ENCODE measurements at regions of chr16 and their contacts with region 1.

Region 1: GRCh38 chr16:79997257-79997656 is 396.7 kb upstream of the MAF start:
- DNase-seq: no peak
- H3K4me3 ChIP-seq: no peak overlapping the region
- H3K27me3 ChIP-seq: no peaks in the 10 kb centered on the region
- CTCF ChIP-seq: peak; percentile 62

Region 2: GRCh38 chr16:80125677-80126076 is 128.4 kb after region 1 on chr16:
- CTCF ChIA-PET with region 1: no interaction called
- POLR2A ChIA-PET with region 1: no interaction called
- DNase-seq: no peak
- H3K4me3 ChIP-seq: no peak overlapping the region
- H3K27me3 ChIP-seq: peaks cover 1% of the 10 kb centered on the region; the same call in 1 of the 2 replicates
- CTCF ChIP-seq: no peak

Region 3: DNA sequence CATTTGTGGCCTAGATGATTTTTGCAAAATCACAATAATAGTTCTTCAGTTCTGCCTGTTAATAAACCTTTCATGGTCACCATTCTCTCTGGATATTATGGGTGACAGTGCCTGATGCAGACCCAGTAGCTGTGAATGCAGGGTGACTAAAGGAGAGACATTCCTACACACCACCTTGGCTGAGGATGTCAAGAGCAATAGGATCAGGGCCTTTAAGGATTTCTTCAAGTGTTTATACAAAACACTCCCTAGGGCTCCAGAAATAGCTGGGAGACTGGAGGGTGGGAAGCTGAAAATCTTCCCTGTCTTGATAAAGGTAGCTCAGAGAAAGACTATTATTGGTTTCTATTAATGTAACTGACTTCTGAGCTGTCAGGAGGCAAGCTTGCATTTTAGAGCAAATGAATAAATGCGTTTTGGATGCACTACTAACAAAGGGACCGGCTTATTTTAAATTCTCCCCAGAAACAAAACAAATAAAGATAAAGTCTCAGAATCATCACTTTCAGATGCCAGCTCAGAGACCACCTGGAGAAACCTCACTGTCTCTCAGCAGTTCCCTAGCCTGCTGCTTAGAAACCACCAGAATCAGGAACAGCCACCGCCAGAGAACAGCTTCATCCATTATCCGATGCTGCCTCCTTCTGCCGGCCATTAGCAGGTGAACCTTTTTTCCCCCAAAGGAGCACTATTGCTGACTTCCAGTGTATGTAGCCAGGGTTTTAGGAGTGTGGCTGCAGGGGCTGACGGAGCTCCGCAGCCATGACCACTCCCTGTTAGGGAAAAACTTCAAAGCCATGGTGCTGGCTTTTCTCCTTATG is 372.1 kb after region 1 on chr16:
- CTCF ChIA-PET with region 1: interaction called, 18 read pairs
- POLR2A ChIA-PET with region 1: no interaction called
- DNase-seq: no peak
- H3K4me3 ChIP-seq: no peak overlapping the region
- H3K27me3 ChIP-seq: no peaks in the 10 kb centered on the region
- CTCF ChIP-seq: peak; percentile 81